Naive thymus-derived CD4-positive, alpha-beta T cell (primary cell): ENCODE measurements at regions of chr22 and their contacts with region 1.

Region 1: DNA sequence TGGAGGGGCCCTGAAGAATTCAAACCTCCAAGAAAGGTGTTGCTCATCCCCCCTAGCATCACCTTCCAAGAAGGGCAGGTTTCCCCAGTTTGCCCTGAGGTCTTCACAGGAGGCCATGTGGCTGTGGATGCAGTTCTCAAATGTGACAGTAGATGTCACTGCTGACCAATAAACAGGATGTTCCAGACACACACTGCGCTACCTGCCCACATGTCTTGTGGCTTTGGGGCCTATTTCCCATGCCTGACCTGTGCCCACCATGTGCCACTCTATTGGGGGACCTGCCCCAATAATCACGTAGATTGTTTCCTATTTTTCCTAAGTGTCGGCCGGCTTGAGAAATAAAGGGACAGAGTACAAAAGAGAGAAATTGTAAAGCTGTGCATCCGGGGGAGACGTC is 4.5 kb downstream of the GSTT2 start:
- DNase-seq: peak in 7 of 9 donors; percentile 31 to 69 (median 37)
- ATAC-seq: peak; percentile 89
- H3K4me3 ChIP-seq: no peak overlapping the region
- H3K4me3 Mint-ChIP-seq: no peak overlapping the region
- H3K27ac ChIP-seq: no peak overlapping the region
- H3K27ac Mint-ChIP-seq: peak overlapping the region in 2 of 9 donors; percentile 10 to 16
- H3K4me1 ChIP-seq: no peaks in the 10 kb centered on the region
- H3K4me1 Mint-ChIP-seq: peaks cover 0 to 10% (median 2%) of the 10 kb centered on the region in 7 donors
- H3K27me3 ChIP-seq: no peaks in the 10 kb centered on the region
- H3K27me3 Mint-ChIP-seq: peaks cover 0 to 4% (median 0%) of the 10 kb centered on the region in 5 donors

Region 2: DNA sequence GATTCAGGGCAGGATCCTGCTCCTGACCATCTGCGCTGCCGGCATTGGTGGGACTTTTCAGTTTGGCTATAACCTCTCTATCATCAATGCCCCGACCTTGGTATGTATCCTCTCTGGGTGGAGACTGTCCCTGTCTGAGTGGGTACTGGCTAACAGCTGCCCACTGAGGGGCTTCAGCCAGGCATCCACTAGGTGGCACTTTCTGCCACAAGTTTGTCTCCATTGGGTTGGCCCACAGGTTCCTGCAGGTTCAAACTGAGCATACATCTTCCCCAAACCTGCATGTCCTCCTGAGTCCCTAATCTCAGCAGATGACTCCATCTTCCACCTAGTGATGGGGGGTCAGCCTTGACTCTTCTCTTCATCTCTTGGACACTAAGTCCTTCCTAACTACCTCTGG is 122.3 kb before region 1 on chr22:
- CTCF ChIA-PET with region 1: no interaction called
- POLR2A ChIA-PET with region 1: no interaction called
- intact Hi-C with region 1: no loop called
- DNase-seq: peak in 1 of 9 donors; percentile 24
- ATAC-seq: no peak
- H3K4me3 ChIP-seq: no peak overlapping the region
- H3K4me3 Mint-ChIP-seq: no peak overlapping the region
- H3K27ac ChIP-seq: no peak overlapping the region
- H3K27ac Mint-ChIP-seq: peak overlapping the region in 2 of 9 donors; percentile 16 to 51
- H3K4me1 ChIP-seq: peaks cover 5 to 7% of the 10 kb centered on the region in 2 donors
- H3K4me1 Mint-ChIP-seq: peaks cover 13 to 27% (median 20%) of the 10 kb centered on the region in 7 donors
- H3K27me3 ChIP-seq: no peaks in the 10 kb centered on the region
- H3K27me3 Mint-ChIP-seq: peaks cover 0 to 3% (median 0%) of the 10 kb centered on the region in 5 donors

Region 3: GRCh38 chr22:24133187-24133965 is 148.9 kb after region 1 on chr22:
- CTCF ChIA-PET with region 1: interaction called, 3 read pairs
- POLR2A ChIA-PET with region 1: no interaction called
- intact Hi-C with region 1: loop called in 1 of 2 experiments (anchors 10 kb)
- DNase-seq: peak in 7 of 9 donors; percentile 43 to 65 (median 57)
- ATAC-seq: peak; percentile 62
- H3K4me3 ChIP-seq: no peak overlapping the region
- H3K4me3 Mint-ChIP-seq: peak overlapping the region in 8 of 10 donors; percentile 2 to 79 (median 60)
- H3K27ac ChIP-seq: peak overlapping the region; percentile 62
- H3K27ac Mint-ChIP-seq: peak overlapping the region; percentile 56 to 95 (median 89)
- H3K4me1 ChIP-seq: peaks cover 6 to 18% of the 10 kb centered on the region in 2 donors
- H3K4me1 Mint-ChIP-seq: peaks cover 18 to 33% (median 29%) of the 10 kb centered on the region in 7 donors
- H3K27me3 ChIP-seq: no peaks in the 10 kb centered on the region
- H3K27me3 Mint-ChIP-seq: no peaks in the 10 kb centered on the region

Region 4: GRCh38 chr22:24189249-24190158 is 205.1 kb after region 1 on chr22:
- CTCF ChIA-PET with region 1: no interaction called
- POLR2A ChIA-PET with region 1: no interaction called
- intact Hi-C with region 1: loop called in 1 of 2 experiments (anchors 10 kb)
- DNase-seq: peak in 7 of 9 donors; percentile 25 to 70 (median 44)
- ATAC-seq: peak; percentile 82
- H3K4me3 ChIP-seq: no peak overlapping the region
- H3K4me3 Mint-ChIP-seq: no peak overlapping the region
- H3K27ac ChIP-seq: no peak overlapping the region
- H3K27ac Mint-ChIP-seq: peak overlapping the region in 1 of 9 donors; percentile 90
- H3K4me1 ChIP-seq: no peaks in the 10 kb centered on the region
- H3K4me1 Mint-ChIP-seq: peaks cover 0 to 11% (median 0%) of the 10 kb centered on the region in 7 donors
- H3K27me3 ChIP-seq: no peaks in the 10 kb centered on the region
- H3K27me3 Mint-ChIP-seq: no peaks in the 10 kb centered on the region

Region 5: GRCh38 chr22:24486501-24486921 is 502.1 kb after region 1 on chr22:
- CTCF ChIA-PET with region 1: no interaction called
- POLR2A ChIA-PET with region 1: no interaction called
- intact Hi-C with region 1: loop called in 1 of 2 experiments (anchors 5 kb)
- DNase-seq: no peak
- ATAC-seq: peak; percentile 74
- H3K4me3 ChIP-seq: no peak overlapping the region
- H3K4me3 Mint-ChIP-seq: no peak overlapping the region
- H3K27ac ChIP-seq: no peak overlapping the region
- H3K27ac Mint-ChIP-seq: peak overlapping the region in 1 of 9 donors; percentile 10
- H3K4me1 ChIP-seq: no peaks in the 10 kb centered on the region
- H3K4me1 Mint-ChIP-seq: peaks cover 0 to 20% (median 0%) of the 10 kb centered on the region in 7 donors
- H3K27me3 ChIP-seq: no peaks in the 10 kb centered on the region
- H3K27me3 Mint-ChIP-seq: peaks cover 0 to 12% (median 0%) of the 10 kb centered on the region in 5 donors